Dendritic cell treated with granulocyte-macrophage colony-stimulating factor and Interleukin-4, amounts not matched to agents 40 ng/mL and 50 ng/mL, for 4 days (primary cell): ENCODE measurements at regions of chr9 and their contacts with region 1.

Region 1: DNA sequence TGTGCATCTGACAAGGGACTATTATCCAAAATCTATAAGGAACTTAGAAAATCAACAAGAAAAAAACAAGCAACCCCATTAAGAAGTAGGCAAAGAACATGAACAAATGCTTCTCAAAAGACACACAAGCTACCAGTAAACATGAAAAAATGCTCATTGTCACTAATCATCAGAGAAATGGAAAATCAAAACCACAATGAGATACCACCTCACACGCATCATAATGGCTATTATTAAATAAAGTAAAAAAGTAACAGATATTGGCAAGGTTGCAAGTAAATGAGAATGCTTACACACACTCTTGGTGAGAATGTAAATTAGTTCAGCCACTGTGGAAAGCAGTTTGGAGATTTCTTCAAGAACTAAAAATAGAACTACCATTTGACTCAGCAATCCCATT is 167.0 kb upstream of the DMRTA1 start:
- H3K4me3 Mint-ChIP-seq: no peak overlapping the region
- H3K27ac Mint-ChIP-seq: no peak overlapping the region
- H3K4me1 Mint-ChIP-seq: no peaks in the 10 kb centered on the region
- H3K27me3 Mint-ChIP-seq: no peaks in the 10 kb centered on the region

Region 2: GRCh38 chr9:21506626-21507484 is 772.8 kb before region 1 on chr9:
- intact Hi-C with region 1: loop called (anchors 10 kb)
- H3K4me3 Mint-ChIP-seq: no peak overlapping the region
- H3K27ac Mint-ChIP-seq: no peak overlapping the region
- H3K4me1 Mint-ChIP-seq: peaks cover 11% of the 10 kb centered on the region
- H3K27me3 Mint-ChIP-seq: peaks cover 9% of the 10 kb centered on the region

Region 3: GRCh38 chr9:21777701-21778100 is 501.9 kb before region 1 on chr9:
- intact Hi-C with region 1: no loop called
- H3K4me3 Mint-ChIP-seq: no peak overlapping the region
- H3K27ac Mint-ChIP-seq: no peak overlapping the region
- H3K4me1 Mint-ChIP-seq: peaks cover 5% of the 10 kb centered on the region
- H3K27me3 Mint-ChIP-seq: no peaks in the 10 kb centered on the region

Region 4: GRCh38 chr9:22265038-22265437 is 14.6 kb before region 1 on chr9:
- intact Hi-C with region 1: no loop called
- H3K4me3 Mint-ChIP-seq: no peak overlapping the region
- H3K27ac Mint-ChIP-seq: no peak overlapping the region
- H3K4me1 Mint-ChIP-seq: no peaks in the 10 kb centered on the region
- H3K27me3 Mint-ChIP-seq: no peaks in the 10 kb centered on the region

Region 5: DNA sequence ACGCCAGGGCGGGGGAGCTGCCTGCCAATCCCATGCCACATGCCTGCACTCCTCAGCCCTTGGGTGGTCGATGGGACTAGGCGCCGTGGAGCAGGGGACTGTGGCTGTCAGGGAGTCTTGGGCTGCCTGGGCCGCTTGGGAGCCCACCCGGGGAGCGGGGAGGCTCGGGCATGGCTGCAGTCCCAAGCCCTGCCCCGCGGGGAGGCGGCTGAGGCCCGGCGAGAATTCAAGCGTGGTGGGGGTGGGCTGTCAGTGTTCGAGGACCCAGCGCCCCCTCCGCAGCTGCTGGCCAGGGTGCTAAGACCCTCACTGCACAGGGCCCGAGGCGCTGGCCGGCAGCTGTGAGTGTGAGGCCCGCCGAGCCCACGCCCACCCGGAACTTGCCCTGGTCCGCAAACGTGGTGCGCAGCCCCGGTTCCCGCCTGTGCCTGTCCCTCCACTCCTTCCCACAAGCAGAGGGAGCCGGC is 83.8 kb after region 1 on chr9:
- intact Hi-C with region 1: no loop called
- H3K4me3 Mint-ChIP-seq: no peak overlapping the region
- H3K27ac Mint-ChIP-seq: no peak overlapping the region
- H3K4me1 Mint-ChIP-seq: no peaks in the 10 kb centered on the region
- H3K27me3 Mint-ChIP-seq: no peaks in the 10 kb centered on the region